ENCODE measurements at regions of chr7 and their contacts with region 1.

Region 1: DNA sequence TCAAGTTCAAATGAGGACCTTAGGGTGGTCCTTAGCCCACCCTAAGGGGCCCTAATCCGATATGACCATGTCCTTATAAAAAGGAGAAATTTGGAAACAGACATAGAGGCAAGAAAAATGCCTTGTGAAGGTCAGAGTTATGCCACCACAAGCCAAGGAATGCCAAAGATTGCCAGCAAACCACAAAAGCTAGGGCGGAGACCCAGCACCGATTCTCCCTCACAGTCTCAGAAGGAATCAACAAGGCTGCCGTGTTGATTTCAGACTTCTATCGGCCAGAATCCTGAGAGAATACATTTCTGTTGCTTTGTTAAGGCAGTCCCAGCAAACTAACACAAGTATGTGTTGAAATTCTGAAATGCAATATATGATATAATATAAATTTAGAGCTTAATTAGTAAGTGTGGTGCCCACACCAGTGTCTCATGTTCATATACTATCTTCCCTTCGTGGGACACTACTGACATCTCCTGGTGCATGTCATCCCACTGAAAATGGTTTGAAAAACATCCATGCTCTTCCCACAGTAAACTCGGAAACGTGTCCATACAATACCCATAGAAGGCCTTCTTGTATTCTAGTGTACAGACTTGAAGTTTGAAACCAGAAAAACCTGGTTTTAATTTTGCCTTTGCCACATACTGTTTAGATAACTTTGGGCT is 349.0 kb downstream of the TNS3 start:
- DNase-seq: peak; percentile 14
- H3K4me3 ChIP-seq: no peak overlapping the region
- H3K27ac ChIP-seq: no peak overlapping the region
- H3K4me1 ChIP-seq: peaks cover 5% of the 10 kb centered on the region
- CTCF ChIP-seq: peak; percentile 68

Region 2: GRCh38 chr7:45923290-45923689 is 1309.6 kb before region 1 on chr7:
- CTCF ChIA-PET with region 1: no interaction called
- POLR2A ChIA-PET with region 1: no interaction called
- intact Hi-C with region 1: loop called (anchors 10 kb)
- DNase-seq: peak; percentile 57
- H3K4me3 ChIP-seq: no peak overlapping the region
- H3K27ac ChIP-seq: no peak overlapping the region
- H3K4me1 ChIP-seq: peaks cover 4% of the 10 kb centered on the region
- CTCF ChIP-seq: peak; percentile 99

Region 3: DNA sequence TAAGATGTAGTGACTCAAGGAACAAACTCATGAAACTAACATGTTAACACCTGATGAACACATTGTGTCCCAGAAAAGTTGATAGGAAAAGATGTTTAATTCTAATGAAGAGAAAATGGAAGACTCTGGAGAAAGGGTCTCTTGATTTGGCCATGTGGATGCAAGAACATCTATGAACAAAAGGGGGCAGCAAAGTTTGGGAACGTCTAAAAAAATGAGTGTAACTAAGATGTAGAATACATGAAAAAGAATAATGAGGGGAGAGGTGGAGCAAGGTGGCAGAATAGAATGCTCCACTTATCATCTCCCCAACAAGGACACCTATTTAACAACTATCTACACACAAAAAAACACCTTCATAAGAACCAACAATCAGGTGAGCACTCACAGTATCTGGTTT is 456.1 kb before region 1 on chr7:
- CTCF ChIA-PET with region 1: no interaction called
- POLR2A ChIA-PET with region 1: no interaction called
- intact Hi-C with region 1: loop called (anchors 10 kb)
- DNase-seq: peak; percentile 53
- H3K4me3 ChIP-seq: no peak overlapping the region
- H3K27ac ChIP-seq: no peak overlapping the region
- H3K4me1 ChIP-seq: no peaks in the 10 kb centered on the region
- CTCF ChIP-seq: peak; percentile 80

Region 4: DNA sequence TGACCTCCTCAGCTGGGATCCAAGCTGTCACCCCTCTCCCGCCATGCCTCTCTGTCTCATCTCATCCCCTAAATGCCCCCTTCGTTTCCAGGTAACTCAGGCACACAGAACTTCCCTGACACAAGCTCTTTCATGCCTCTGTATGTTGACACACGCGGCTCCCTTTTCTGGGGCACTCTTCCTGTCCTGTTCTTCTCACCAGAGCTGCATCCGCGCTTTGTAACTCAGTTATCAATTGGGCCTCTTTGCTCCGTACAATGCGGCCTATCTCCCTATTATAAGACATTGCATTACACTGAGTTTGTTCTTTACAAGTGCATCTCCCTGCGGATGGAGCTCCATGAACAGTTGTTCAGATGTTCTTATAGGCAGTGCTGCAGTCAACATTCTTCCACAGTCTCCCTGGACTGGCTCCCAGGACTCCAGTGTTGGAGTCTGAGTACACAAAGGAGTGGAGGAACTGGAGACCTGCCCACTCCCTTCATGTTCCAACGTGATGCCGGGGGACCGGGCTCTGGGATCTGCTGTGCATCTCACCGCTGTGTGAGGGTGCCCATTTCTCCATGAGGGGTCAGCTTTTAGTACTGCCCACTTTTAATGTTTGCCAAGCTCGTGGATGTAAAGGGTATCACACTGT is 405.9 kb after region 1 on chr7:
- CTCF ChIA-PET with region 1: no interaction called
- POLR2A ChIA-PET with region 1: no interaction called
- intact Hi-C with region 1: no loop called
- DNase-seq: no peak
- H3K4me3 ChIP-seq: no peak overlapping the region
- H3K27ac ChIP-seq: no peak overlapping the region
- H3K4me1 ChIP-seq: peaks cover 12% of the 10 kb centered on the region
- CTCF ChIP-seq: no peak